AG04449 (cell line): ENCODE measurements at regions of chr6 and their contacts with region 1.

Region 1: DNA sequence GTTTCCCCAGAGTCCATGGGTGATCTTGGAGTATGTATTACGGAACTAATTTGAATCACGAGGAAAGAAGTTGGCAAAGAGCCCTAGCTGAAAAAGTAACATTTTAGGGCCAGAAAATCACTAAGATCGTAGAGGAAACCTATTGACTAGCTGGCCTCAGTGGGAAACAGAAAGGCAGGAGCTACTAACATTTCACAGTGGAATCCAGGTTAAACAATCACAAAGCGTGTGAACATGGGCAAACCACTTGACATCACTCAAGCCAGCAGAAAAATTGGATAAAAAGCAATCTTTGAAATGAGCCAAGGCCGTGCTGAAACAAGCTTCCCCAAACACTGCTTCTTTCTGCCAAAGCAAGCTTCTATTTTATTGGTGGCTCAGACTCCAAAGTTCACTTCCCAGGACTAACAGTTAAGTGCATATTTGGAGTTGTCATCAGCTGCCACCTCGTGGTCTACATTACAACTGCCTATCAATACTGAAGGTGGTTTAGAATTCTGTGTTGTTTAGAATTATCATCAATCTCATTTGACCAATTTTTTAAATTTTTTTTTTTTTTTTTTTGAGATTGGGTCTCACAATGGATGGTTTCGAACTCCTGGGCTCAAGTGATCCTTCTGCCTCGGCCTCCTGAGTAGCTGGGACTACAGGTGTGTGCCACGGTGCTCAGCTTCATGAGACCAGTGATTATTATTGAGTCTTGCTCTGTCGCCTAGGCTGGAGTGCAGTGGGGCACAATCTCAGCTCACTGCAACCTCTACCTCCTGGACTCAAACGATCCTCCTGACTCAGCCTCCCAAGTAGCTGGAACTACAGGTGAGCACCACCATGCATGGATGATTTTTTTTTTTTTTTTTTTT is 10.6 kb downstream of the RPS10 start:
- DNase-seq: no peak
- H3K4me3 ChIP-seq: no peak overlapping the region
- CTCF ChIP-seq: peak; percentile 33

Region 2: DNA sequence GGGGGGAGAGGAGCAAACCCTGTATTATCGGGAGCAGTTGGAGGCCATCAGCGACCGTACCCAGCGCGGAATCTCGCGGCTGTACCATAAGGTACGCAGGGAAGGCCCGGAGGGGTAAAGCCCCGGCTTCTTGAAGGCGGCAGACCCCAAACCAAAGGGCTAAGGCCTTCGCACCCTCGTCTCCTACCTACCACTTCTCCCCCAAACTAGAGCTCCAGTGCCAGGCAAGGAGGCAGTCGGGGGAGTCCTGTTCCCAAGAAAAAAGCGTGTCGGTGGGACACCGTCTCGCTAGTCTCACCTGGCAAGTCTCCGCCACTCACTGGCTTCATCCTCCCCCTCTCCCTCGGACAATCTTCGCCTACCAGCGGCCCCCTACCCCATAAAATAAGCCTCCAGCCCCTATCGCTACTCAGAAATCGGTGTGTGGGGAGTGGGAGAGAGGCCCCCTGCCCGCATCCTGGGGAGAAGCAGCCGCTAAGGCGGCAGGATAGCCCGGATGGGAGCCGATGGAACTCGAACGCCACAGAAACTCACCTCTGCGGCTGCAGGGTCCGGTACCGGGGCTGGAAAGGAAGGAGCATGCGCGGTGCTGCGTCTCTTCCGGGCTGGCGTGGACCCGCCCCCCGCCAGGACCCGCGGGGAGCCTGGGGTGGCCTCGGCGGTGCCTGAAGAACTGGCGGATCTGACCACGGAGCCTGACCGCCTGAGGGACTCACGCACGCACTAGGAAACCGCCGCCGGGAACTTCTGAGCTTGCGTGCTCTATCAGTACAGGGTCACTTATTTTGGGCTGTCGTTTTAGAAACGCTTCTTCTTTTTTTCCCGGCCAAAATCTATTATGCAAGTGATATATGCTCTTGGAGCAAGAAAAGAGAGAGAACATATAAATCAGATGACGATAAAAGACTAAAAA is 10.5 kb after region 1 on chr6 and contains the start of gene RPS10:
- CTCF ChIA-PET with region 1: interaction called, 5 read pairs
- POLR2A ChIA-PET with region 1: interaction called, 11 read pairs
- DNase-seq: peak; percentile 54
- H3K4me3 ChIP-seq: peak within 1 kb of the TSS; percentile 93
- CTCF ChIP-seq: no peak